Caco-2 (cell line): ENCODE measurements at regions of chr20 and their contacts with region 1.

Region 1: GRCh38 chr20:5126512-5127203 is at the start of gene CDS2:
- DNase-seq: peak; percentile 100
- H3K4me3 ChIP-seq: peak within 1 kb of the TSS; percentile 95
- H3K4me3 Mint-ChIP-seq: peak within 1 kb of the TSS; percentile 86
- H3K27ac Mint-ChIP-seq: peak within 1 kb of the TSS; percentile 74
- H3K4me1 ChIP-seq: peaks cover 7% of the 10 kb centered on the region
- H3K4me1 Mint-ChIP-seq: peaks cover 13% of the 10 kb centered on the region
- H3K27me3 ChIP-seq: no peaks in the 10 kb centered on the region
- H3K27me3 Mint-ChIP-seq: no peaks in the 10 kb centered on the region
- CTCF ChIP-seq: peak; percentile 49 to 74
- total RNA-seq, gene CDS2: 46.7 and 53.8 TPM in 2 replicates

Region 2: DNA sequence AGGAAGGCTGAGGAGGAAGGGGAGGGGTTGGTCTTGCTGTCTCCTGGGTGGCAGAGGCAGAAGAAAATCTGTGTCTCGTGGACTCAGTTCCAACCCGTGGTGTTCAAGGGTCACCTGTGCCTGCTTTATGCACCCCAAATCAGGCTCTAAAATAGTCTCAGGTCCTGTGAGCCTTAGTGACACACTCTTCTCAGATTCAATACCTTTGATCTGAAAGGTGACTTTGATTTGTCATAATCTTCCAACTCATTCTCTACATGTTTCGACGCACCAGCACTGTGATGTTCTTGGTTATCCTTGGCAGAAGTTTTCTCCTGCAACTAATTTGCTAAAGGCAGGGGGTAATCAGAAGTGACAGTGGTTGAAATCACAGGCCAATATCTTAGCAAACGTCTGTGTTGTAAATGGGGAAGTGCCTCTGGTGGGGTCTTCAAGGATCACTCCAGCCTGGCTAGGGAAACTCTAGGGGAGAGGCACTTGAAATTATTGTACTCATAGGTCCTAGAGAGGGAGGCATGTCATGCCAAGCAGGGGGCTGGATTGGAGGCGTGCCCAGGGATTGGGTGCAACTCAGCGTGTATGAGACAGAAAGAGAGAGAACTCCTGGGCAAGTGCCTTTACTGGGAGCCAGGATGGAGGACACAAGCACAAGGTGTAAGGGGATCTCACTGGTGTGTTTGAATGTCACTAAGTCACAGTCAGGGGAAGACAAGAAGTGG is 423.9 kb before region 1 on chr20:
- CTCF ChIA-PET with region 1: no interaction called
- POLR2A ChIA-PET with region 1: no interaction called
- intact Hi-C with region 1: no loop called
- DNase-seq: no peak
- H3K4me3 ChIP-seq: no peak overlapping the region
- H3K4me3 Mint-ChIP-seq: no peak overlapping the region
- H3K27ac Mint-ChIP-seq: no peak overlapping the region
- H3K4me1 ChIP-seq: peaks cover 10% of the 10 kb centered on the region
- H3K4me1 Mint-ChIP-seq: no peaks in the 10 kb centered on the region
- H3K27me3 ChIP-seq: no peaks in the 10 kb centered on the region
- H3K27me3 Mint-ChIP-seq: no peaks in the 10 kb centered on the region
- CTCF ChIP-seq: no peak

Region 3: GRCh38 chr20:5168651-5169396 is 42.2 kb after region 1 on chr20:
- CTCF ChIA-PET with region 1: interaction called, 10 read pairs
- POLR2A ChIA-PET with region 1: interaction called, 10 read pairs
- intact Hi-C with region 1: no loop called
- DNase-seq: no peak
- H3K4me3 ChIP-seq: no peak overlapping the region
- H3K4me3 Mint-ChIP-seq: no peak overlapping the region
- H3K27ac Mint-ChIP-seq: no peak overlapping the region
- H3K4me1 ChIP-seq: no peaks in the 10 kb centered on the region
- H3K4me1 Mint-ChIP-seq: peaks cover 8% of the 10 kb centered on the region
- H3K27me3 ChIP-seq: no peaks in the 10 kb centered on the region
- H3K27me3 Mint-ChIP-seq: no peaks in the 10 kb centered on the region
- CTCF ChIP-seq: no peak

Region 4: GRCh38 chr20:5191829-5192569 is 65.3 kb after region 1 on chr20:
- CTCF ChIA-PET with region 1: interaction called, 246 read pairs
- POLR2A ChIA-PET with region 1: interaction called, 25 read pairs
- intact Hi-C with region 1: loop called (anchors 1 kb)
- DNase-seq: peak in 1 of 2 experiments; percentile 61
- H3K4me3 ChIP-seq: no peak overlapping the region
- H3K4me3 Mint-ChIP-seq: no peak overlapping the region
- H3K27ac Mint-ChIP-seq: no peak overlapping the region
- H3K4me1 ChIP-seq: no peaks in the 10 kb centered on the region
- H3K4me1 Mint-ChIP-seq: no peaks in the 10 kb centered on the region
- H3K27me3 ChIP-seq: no peaks in the 10 kb centered on the region
- H3K27me3 Mint-ChIP-seq: no peaks in the 10 kb centered on the region
- CTCF ChIP-seq: peak; percentile 80 to 81

Region 5: GRCh38 chr20:5222919-5223634 is 96.4 kb after region 1 on chr20:
- CTCF ChIA-PET with region 1: interaction called, 18 read pairs
- POLR2A ChIA-PET with region 1: no interaction called
- intact Hi-C with region 1: no loop called
- DNase-seq: peak; percentile 66 to 70
- H3K4me3 ChIP-seq: no peak overlapping the region
- H3K4me3 Mint-ChIP-seq: no peak overlapping the region
- H3K27ac Mint-ChIP-seq: no peak overlapping the region
- H3K4me1 ChIP-seq: no peaks in the 10 kb centered on the region
- H3K4me1 Mint-ChIP-seq: peaks cover 7% of the 10 kb centered on the region
- H3K27me3 ChIP-seq: no peaks in the 10 kb centered on the region
- H3K27me3 Mint-ChIP-seq: no peaks in the 10 kb centered on the region
- CTCF ChIP-seq: peak; percentile 81 to 91